CD4-positive, alpha-beta T cell (primary cell): ENCODE measurements at regions of chr16 and their contacts with region 1.

Region 1: DNA sequence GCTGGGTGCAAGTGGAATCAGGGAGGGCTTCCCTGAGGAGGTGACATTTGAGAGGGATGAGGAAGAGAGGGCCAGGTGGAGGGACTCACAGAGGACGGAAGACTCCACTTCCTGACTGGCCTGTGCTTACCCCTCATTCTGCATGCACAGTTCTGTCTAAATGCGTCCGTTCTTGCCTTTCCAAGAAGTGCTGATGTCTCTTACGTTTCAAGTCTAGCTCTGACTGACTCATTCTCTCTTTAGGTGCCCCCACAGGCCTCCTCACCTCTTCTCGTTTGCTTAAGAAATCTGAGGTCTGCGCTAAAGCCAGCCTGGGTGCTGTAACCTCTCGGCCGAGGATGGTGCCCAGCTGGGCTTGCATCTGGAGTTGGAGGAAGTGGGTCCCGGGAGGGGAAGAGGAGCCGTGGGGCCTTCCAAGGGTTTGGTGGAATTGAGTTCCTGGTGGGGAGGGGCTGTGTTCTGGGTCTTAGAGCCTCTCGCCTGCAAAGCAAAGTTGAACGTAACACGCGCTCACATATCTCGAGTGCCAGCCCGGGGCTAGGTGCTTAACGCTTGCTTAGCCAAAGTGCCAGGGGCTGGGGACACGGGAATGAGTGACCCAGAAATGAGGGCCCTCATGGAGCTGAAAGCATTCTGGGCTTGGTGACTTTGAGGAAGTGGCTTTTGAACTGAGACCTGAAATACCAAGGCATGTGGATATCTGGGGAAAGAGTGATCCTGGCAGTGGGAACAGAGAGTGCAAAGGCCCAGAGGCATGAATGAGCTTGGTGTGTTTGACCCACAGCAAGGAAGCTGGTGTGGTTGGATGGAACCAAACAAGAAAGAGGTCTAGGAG is 4.8 kb downstream of the IL4R start:
- DNase-seq: peak; percentile 20 to 75 (median 52)
- ATAC-seq: peak; percentile 70
- H3K4me3 ChIP-seq: peak overlapping the region; percentile 91
- H3K4me3 Mint-ChIP-seq: peak overlapping the region; percentile 86
- H3K27ac ChIP-seq: peak overlapping the region; percentile 70 to 94
- H3K27ac Mint-ChIP-seq: peak overlapping the region; percentile 89
- H3K4me1 ChIP-seq: peaks cover 87% of the 10 kb centered on the region
- H3K4me1 Mint-ChIP-seq: peaks cover 86% of the 10 kb centered on the region
- H3K27me3 ChIP-seq: no peaks in the 10 kb centered on the region
- H3K27me3 Mint-ChIP-seq: no peaks in the 10 kb centered on the region
- CTCF ChIP-seq: no peak

Region 2: DNA sequence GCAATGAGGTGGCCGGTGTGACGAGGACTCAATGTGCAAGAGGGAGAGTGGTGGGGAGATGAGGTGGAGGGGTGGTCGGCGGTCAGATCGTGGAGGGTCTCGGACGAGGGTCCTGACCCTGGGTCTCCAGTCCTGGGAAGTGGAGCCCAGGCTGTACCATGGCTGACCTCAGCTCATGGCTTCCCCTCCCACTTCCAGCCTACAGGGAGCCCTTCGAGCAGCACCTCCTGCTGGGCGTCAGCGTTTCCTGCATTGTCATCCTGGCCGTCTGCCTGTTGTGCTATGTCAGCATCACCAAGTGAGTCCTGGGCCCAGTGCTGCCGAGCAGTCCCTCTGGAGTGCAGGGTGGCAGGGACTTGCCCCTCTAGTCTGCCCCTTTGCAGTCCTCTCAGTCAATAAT is 37.0 kb after region 1 on chr16:
- CTCF ChIA-PET with region 1: no interaction called
- POLR2A ChIA-PET with region 1: no interaction called
- intact Hi-C with region 1: loop called in 1 of 2 experiments (anchors 5 kb)
- DNase-seq: peak in 12 of 14 experiments; percentile 23 to 75 (median 46)
- ATAC-seq: peak; percentile 76
- H3K4me3 ChIP-seq: no peak overlapping the region
- H3K4me3 Mint-ChIP-seq: no peak overlapping the region
- H3K27ac ChIP-seq: no peak overlapping the region
- H3K27ac Mint-ChIP-seq: peak overlapping the region; percentile 84
- H3K4me1 ChIP-seq: no peaks in the 10 kb centered on the region
- H3K4me1 Mint-ChIP-seq: peaks cover 17% of the 10 kb centered on the region
- H3K27me3 ChIP-seq: no peaks in the 10 kb centered on the region
- H3K27me3 Mint-ChIP-seq: no peaks in the 10 kb centered on the region
- CTCF ChIP-seq: peak; percentile 23